GM12878 (cell line): ENCODE measurements at regions of chr2 and their contacts with region 1.

Region 1: DNA sequence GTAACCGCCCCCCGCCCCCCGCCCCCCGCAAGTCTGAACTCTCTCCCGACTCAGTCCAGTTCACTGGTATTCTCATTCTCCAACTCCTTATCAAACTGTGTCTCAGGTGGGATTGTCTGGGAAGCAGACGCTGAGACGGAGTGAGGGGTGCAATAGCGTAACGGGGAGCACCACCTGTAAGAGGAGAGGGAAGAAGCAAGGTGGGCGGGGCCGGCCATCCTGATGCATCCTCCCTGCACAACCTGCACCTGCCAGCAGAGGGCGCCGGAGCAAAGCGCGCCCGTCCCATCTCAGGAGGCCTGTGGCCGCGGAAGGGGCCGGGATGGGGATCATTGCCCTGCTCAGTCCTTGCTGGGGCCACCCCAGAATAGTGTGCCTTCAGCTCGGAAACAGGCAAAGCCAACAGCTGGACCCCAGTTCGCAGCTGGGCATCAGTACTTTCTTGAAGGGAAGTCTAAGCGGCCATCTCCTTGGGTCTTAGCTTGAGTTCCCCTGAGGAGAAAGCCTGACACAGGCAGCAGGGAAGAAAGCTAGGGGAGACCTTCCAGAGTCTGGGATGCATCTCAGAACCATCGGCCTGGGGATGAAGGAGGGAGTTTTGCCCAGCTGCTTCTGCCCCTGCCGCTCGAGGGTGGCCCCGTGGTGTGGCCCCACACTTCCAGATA is 208.0 kb downstream of the TFCP2L1 start:
- DNase-seq: no peak
- ATAC-seq: peak; percentile 78
- H3K4me3 ChIP-seq: no peak overlapping the region
- H3K27ac ChIP-seq: no peak overlapping the region
- H3K4me1 ChIP-seq: no peaks in the 10 kb centered on the region
- H3K27me3 ChIP-seq: no peaks in the 10 kb centered on the region; a peak in 1 of 4 replicates
- CTCF ChIP-seq: peak; percentile 79 to 99 (median 92)
- EP300 ChIP-seq: no peak
- POLR2A ChIP-seq: no peak
- RAD21 ChIP-seq: 0 out of 2 replicates have a peak, but pooled peaks have one; percentile 11

Region 2: GRCh38 chr2:120441744-120442471 is 635.1 kb before region 1 on chr2:
- CTCF ChIA-PET with region 1: no interaction called
- POLR2A ChIA-PET with region 1: no interaction called
- RAD21 ChIA-PET with region 1: no interaction called
- SMC1A ChIA-PET with region 1: no interaction called
- in situ Hi-C with region 1: no loop called
- intact Hi-C with region 1: no loop called
- DNase-seq: no peak
- ATAC-seq: no peak
- H3K4me3 ChIP-seq: no peak overlapping the region
- H3K27ac ChIP-seq: no peak overlapping the region
- H3K4me1 ChIP-seq: no peaks in the 10 kb centered on the region
- H3K27me3 ChIP-seq: peaks cover 12 to 14% of the 10 kb centered on the region in 2 experiments
- CTCF ChIP-seq: no peak
- EP300 ChIP-seq: no peak
- POLR2A ChIP-seq: no peak
- RAD21 ChIP-seq: no peak

Region 3: DNA sequence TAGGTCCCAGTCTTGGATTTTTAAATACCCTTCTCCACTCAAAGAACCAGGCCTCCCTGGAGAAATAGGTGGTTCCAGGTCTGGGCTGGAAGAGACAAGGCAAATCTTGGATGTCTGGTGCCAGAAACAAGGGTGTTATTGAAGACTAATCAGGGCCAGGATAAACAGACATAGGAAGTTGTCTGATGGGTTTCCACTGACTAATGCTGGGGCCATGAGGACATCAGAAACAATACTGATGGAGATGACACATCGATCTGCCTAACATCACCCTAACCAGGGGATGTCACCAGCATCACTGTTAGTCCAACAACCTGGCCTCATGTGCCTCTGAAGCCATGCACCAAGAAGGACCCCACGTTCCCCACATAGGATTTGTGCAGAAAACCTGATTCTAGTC is 383.9 kb before region 1 on chr2:
- CTCF ChIA-PET with region 1: interaction called, 15 read pairs
- POLR2A ChIA-PET with region 1: no interaction called
- RAD21 ChIA-PET with region 1: interaction called, 6 read pairs
- SMC1A ChIA-PET with region 1: interaction called, 3 read pairs
- in situ Hi-C with region 1: loop called (anchors 5 kb)
- intact Hi-C with region 1: loop called (anchors 1 kb)
- DNase-seq: no peak
- ATAC-seq: no peak
- H3K4me3 ChIP-seq: no peak overlapping the region
- H3K27ac ChIP-seq: no peak overlapping the region
- H3K4me1 ChIP-seq: no peaks in the 10 kb centered on the region
- H3K27me3 ChIP-seq: peaks cover 4% of the 10 kb centered on the region in 2 experiments; a peak in 2 of 4 replicates
- CTCF ChIP-seq: no peak
- EP300 ChIP-seq: no peak
- POLR2A ChIP-seq: no peak
- RAD21 ChIP-seq: no peak

Region 4: DNA sequence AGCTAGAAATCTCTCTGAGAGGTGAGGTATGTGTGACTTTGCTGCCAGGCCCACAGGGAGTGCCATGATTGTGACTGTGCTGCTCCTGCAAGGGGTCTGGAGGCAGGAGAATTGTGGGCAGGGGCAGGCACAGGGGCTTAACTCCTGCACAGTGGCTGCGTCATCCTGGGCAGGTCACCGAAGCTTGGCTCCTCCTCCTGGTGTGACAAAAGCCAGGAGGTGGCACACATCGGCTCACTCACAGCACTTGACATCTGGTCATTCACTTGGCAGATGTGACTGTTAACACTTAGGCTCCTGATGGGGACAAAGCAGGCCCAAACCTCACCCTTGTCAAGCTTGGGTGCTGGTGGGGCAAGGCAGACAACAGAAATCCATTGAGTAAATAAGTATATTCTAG is 377.7 kb before region 1 on chr2:
- CTCF ChIA-PET with region 1: interaction called, 15 read pairs
- POLR2A ChIA-PET with region 1: no interaction called
- RAD21 ChIA-PET with region 1: interaction called, 6 read pairs
- SMC1A ChIA-PET with region 1: interaction called, 3 read pairs
- in situ Hi-C with region 1: loop called (anchors 5 kb)
- intact Hi-C with region 1: loop called (anchors 1 kb)
- DNase-seq: no peak
- ATAC-seq: no peak
- H3K4me3 ChIP-seq: no peak overlapping the region
- H3K27ac ChIP-seq: no peak overlapping the region
- H3K4me1 ChIP-seq: no peaks in the 10 kb centered on the region
- H3K27me3 ChIP-seq: peaks cover 4 to 6% of the 10 kb centered on the region in 2 experiments; a peak in 3 of 4 replicates
- CTCF ChIP-seq: no peak
- EP300 ChIP-seq: no peak
- POLR2A ChIP-seq: no peak
- RAD21 ChIP-seq: no peak

Region 5: DNA sequence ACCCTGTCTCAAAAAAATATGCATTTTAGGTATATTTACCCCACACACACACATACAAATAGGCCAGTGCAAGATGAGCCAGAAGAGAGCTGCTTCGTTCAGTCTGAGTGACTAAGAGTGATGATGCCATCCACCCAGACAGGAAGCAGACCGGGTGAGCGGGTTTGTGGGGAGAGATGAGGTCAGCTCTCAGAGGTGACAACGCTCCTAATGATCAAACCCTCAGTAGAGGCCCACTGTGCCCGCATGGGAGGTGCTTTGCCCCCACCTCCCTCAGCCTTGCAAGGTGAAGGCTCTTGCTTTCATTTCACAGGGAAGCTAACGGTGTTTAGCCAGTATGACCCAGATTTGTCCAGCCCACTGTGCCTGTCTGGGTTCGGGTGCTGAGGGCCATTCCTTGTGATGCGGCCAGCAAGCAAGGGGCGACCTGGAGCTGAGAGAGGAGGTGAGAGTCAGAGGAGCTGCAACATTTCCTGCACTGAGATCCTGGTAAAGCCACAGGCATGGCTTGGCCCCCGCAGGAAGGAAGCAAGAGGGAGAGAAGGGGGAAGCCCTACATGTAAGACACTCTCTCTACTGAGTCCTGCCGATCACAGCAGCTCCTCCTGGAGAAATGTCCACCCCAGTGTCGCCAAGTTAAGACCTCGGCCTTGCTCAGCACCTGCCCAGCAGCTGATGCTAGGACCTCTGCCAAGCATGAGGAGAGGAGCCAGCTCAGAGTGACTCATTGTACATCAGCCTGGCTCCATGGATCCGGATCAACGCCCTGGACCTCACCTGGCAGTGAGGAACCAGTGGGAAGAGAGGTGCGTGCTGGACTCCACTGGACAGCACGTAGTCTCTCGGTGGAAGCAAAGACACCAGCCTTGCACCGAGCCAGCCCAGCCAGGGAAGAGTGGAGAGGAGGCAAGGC is 622.7 kb after region 1 on chr2:
- CTCF ChIA-PET with region 1: no interaction called
- POLR2A ChIA-PET with region 1: no interaction called
- RAD21 ChIA-PET with region 1: no interaction called
- SMC1A ChIA-PET with region 1: no interaction called
- in situ Hi-C with region 1: loop called (anchors 25 kb)
- intact Hi-C with region 1: no loop called
- DNase-seq: peak; percentile 60
- ATAC-seq: peak; percentile 99
- H3K4me3 ChIP-seq: no peak overlapping the region; the same call in 1 of the 2 replicates
- H3K27ac ChIP-seq: peak overlapping the region; percentile 22
- H3K4me1 ChIP-seq: peaks cover 15% of the 10 kb centered on the region
- H3K27me3 ChIP-seq: no peaks in the 10 kb centered on the region
- CTCF ChIP-seq: no peak
- EP300 ChIP-seq: no peak; a peak in 1 of 4 replicates
- POLR2A ChIP-seq: peak; percentile 47; the same call in 1 of the 2 replicates
- RAD21 ChIP-seq: no peak